ENCODE measurements at regions of chr5 and their contacts with region 1.

Region 1: GRCh38 chr5:77143998-77144836 is 57.1 kb upstream of the ZBED3 start:
- DNase-seq: peak; percentile 47 to 58 (median 53)
- H3K4me3 ChIP-seq: no peak overlapping the region
- H3K4me3 Mint-ChIP-seq: no peak overlapping the region
- H3K27ac ChIP-seq: no peak overlapping the region
- H3K27ac Mint-ChIP-seq: peak overlapping the region in 3 of 7 donors; percentile 32 to 60 (median 40)
- H3K4me1 ChIP-seq: no peaks in the 10 kb centered on the region
- H3K4me1 Mint-ChIP-seq: peaks cover 0 to 4% (median 3%) of the 10 kb centered on the region in 4 donors
- H3K27me3 ChIP-seq: no peaks in the 10 kb centered on the region
- H3K27me3 Mint-ChIP-seq: peaks cover 0 to 2% of the 10 kb centered on the region in 2 donors

Region 2: GRCh38 chr5:76971516-76971915 is 172.7 kb before region 1 on chr5:
- CTCF ChIA-PET with region 1: no interaction called
- POLR2A ChIA-PET with region 1: no interaction called
- intact Hi-C with region 1: no loop called
- DNase-seq: no peak
- H3K4me3 ChIP-seq: no peak overlapping the region
- H3K4me3 Mint-ChIP-seq: no peak overlapping the region
- H3K27ac ChIP-seq: no peak overlapping the region
- H3K27ac Mint-ChIP-seq: no peak overlapping the region
- H3K4me1 ChIP-seq: no peaks in the 10 kb centered on the region
- H3K4me1 Mint-ChIP-seq: no peaks in the 10 kb centered on the region
- H3K27me3 ChIP-seq: no peaks in the 10 kb centered on the region
- H3K27me3 Mint-ChIP-seq: peaks cover 10 to 18% of the 10 kb centered on the region in 2 donors

Region 3: DNA sequence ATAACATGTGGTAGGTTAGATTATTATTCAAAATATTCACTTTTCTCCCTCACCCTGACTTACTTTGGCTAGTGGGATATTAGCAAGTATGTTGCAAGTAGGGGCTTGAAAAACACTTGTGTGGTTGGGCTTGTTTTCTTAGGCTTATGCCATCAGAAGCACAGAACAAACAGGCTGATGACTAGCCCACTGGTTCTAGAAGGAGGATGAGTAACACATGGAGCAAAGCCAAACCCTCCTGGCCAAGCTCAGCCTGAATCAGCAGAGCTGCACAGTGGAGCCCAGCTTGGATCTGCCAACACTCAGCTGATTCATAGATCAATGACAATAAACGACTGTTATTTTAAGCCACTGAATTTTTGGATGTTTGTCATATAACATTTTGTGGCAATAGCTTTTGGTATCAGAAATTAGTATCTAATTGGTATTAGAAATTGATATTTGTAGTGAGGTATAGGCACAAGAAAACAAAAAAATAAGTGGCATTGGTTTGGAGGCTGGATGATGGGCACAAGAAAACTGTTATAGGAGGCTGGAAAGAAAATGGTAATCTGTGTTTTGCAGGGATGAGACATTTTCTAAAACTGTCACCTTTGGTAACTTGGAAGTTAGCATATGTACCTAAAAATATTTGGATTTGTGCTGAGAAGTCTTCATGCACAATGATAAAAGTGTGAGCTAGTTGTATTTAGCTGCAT is 11.0 kb before region 1 on chr5:
- CTCF ChIA-PET with region 1: interaction called, 11 read pairs
- POLR2A ChIA-PET with region 1: no interaction called
- intact Hi-C with region 1: no loop called
- DNase-seq: no peak
- H3K4me3 ChIP-seq: no peak overlapping the region
- H3K4me3 Mint-ChIP-seq: no peak overlapping the region
- H3K27ac ChIP-seq: no peak overlapping the region
- H3K27ac Mint-ChIP-seq: peak overlapping the region in 1 of 7 donors; percentile 20
- H3K4me1 ChIP-seq: no peaks in the 10 kb centered on the region
- H3K4me1 Mint-ChIP-seq: peaks cover 0 to 2% (median 0%) of the 10 kb centered on the region in 4 donors
- H3K27me3 ChIP-seq: no peaks in the 10 kb centered on the region
- H3K27me3 Mint-ChIP-seq: peaks cover 0 to 11% of the 10 kb centered on the region in 2 donors

Region 4: GRCh38 chr5:77155179-77155785 is 11.1 kb after region 1 on chr5:
- CTCF ChIA-PET with region 1: interaction called, 31 read pairs
- POLR2A ChIA-PET with region 1: no interaction called
- intact Hi-C with region 1: no loop called
- DNase-seq: peak; percentile 73 to 84 (median 77)
- H3K4me3 ChIP-seq: no peak overlapping the region
- H3K4me3 Mint-ChIP-seq: peak overlapping the region in 3 of 8 donors; percentile 2 to 73 (median 68)
- H3K27ac ChIP-seq: no peak overlapping the region
- H3K27ac Mint-ChIP-seq: peak overlapping the region; percentile 58 to 99 (median 96)
- H3K4me1 ChIP-seq: peaks cover 28% of the 10 kb centered on the region
- H3K4me1 Mint-ChIP-seq: peaks cover 14 to 23% (median 21%) of the 10 kb centered on the region in 4 donors
- H3K27me3 ChIP-seq: no peaks in the 10 kb centered on the region
- H3K27me3 Mint-ChIP-seq: peaks cover 2 to 11% of the 10 kb centered on the region in 2 donors

Region 5: DNA sequence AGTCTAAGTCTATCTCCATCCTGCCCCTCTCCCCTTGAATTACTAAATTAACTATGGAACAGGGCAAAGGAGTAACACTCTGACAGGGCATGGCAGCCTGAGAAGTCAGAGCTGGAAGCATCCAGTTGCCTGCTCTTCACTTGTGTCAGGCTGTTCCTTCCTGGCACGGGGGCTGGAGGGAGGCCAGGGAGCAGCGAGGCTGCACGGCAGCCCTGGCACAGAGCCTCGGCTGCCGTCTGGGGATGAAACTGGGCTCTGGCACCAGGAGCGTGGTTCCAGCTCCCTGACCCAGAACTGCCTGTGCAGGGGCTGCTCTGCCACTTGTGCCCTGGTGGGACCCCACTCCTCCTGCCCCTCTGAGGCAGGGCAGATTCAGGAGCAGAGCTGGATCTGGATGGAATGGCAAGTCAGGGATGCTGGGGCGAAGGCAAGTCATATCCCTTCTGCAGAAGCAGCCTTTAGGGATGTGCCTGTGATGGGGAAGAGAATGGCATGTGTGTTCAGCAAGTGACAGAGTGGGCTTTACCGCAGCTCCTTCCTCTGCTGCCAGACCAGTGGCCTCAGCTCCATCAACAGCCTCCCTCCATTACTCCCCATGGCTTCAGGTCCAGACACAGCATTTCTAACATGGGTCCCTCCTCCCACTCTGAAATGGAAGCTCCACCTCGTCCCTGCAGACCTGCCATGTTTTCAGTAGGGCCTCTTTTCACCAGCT is 24.1 kb after region 1 on chr5:
- CTCF ChIA-PET with region 1: interaction called, 13 read pairs
- POLR2A ChIA-PET with region 1: no interaction called
- intact Hi-C with region 1: no loop called
- DNase-seq: no peak
- H3K4me3 ChIP-seq: no peak overlapping the region
- H3K4me3 Mint-ChIP-seq: no peak overlapping the region
- H3K27ac ChIP-seq: no peak overlapping the region
- H3K27ac Mint-ChIP-seq: no peak overlapping the region
- H3K4me1 ChIP-seq: no peaks in the 10 kb centered on the region
- H3K4me1 Mint-ChIP-seq: no peaks in the 10 kb centered on the region
- H3K27me3 ChIP-seq: no peaks in the 10 kb centered on the region
- H3K27me3 Mint-ChIP-seq: peaks cover 2 to 8% of the 10 kb centered on the region in 2 donors

Region 6: DNA sequence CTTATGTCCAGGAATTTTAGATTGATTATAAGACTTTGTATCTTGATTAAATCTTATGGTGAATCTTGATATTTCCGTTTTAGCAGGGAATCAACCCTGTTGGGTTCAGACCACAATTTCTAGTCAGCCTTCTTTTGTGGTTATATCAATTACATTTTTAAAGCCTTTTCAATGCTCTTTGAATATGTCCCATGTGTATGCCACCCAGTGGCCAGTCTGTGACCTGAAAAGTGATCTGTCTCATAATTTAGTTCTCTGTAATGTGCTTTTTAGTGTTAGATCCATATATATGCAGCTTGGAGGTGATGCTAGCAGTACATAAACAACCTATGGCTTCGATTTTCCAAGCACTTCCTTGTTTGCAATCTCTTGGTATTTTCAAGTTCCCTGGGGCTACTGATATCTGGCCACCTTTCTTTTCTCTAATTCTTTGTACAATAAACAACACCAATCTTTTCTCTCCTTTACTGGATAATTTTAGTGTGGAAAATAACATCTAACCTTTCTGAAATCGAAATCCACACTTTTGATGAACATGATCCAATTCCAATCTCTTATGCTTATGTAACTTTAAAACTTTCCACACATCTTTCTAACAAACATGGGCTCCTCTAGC is 95.0 kb after region 1 on chr5:
- CTCF ChIA-PET with region 1: interaction called, 3 read pairs
- POLR2A ChIA-PET with region 1: no interaction called
- intact Hi-C with region 1: loop called (anchors 2 kb)
- DNase-seq: peak in 3 of 5 donors; percentile 10 to 35 (median 25)
- H3K4me3 ChIP-seq: no peak overlapping the region
- H3K4me3 Mint-ChIP-seq: no peak overlapping the region
- H3K27ac ChIP-seq: no peak overlapping the region
- H3K27ac Mint-ChIP-seq: no peak overlapping the region
- H3K4me1 ChIP-seq: no peaks in the 10 kb centered on the region
- H3K4me1 Mint-ChIP-seq: no peaks in the 10 kb centered on the region
- H3K27me3 ChIP-seq: no peaks in the 10 kb centered on the region
- H3K27me3 Mint-ChIP-seq: peaks cover 6 to 9% of the 10 kb centered on the region in 2 donors

Region 7: DNA sequence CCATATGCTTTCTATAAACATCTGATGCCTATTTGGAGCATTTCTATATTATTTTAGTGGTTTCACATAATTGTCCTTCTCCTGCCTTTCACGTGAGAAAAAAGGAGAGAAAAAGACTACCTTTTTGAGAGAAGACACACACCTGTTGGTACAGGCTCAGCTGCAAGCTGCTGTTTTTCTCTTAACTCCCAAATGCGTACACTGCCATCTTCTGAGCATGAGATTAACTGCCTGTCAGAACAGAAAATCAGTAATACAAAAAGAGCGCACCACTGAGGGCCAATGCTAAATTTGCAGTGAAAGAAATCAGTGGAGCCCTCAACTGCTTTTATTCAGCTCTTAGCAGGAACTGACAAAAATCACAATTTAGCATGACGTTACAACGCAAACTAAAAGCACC is 293.0 kb after region 1 on chr5:
- CTCF ChIA-PET with region 1: interaction called, 4 read pairs
- POLR2A ChIA-PET with region 1: no interaction called
- intact Hi-C with region 1: loop called (anchors 1 kb)
- DNase-seq: peak in 1 of 5 donors; percentile 9
- H3K4me3 ChIP-seq: no peak overlapping the region
- H3K4me3 Mint-ChIP-seq: no peak overlapping the region
- H3K27ac ChIP-seq: no peak overlapping the region
- H3K27ac Mint-ChIP-seq: no peak overlapping the region
- H3K4me1 ChIP-seq: no peaks in the 10 kb centered on the region
- H3K4me1 Mint-ChIP-seq: no peaks in the 10 kb centered on the region
- H3K27me3 ChIP-seq: no peaks in the 10 kb centered on the region
- H3K27me3 Mint-ChIP-seq: no peaks in the 10 kb centered on the region

Region 8: DNA sequence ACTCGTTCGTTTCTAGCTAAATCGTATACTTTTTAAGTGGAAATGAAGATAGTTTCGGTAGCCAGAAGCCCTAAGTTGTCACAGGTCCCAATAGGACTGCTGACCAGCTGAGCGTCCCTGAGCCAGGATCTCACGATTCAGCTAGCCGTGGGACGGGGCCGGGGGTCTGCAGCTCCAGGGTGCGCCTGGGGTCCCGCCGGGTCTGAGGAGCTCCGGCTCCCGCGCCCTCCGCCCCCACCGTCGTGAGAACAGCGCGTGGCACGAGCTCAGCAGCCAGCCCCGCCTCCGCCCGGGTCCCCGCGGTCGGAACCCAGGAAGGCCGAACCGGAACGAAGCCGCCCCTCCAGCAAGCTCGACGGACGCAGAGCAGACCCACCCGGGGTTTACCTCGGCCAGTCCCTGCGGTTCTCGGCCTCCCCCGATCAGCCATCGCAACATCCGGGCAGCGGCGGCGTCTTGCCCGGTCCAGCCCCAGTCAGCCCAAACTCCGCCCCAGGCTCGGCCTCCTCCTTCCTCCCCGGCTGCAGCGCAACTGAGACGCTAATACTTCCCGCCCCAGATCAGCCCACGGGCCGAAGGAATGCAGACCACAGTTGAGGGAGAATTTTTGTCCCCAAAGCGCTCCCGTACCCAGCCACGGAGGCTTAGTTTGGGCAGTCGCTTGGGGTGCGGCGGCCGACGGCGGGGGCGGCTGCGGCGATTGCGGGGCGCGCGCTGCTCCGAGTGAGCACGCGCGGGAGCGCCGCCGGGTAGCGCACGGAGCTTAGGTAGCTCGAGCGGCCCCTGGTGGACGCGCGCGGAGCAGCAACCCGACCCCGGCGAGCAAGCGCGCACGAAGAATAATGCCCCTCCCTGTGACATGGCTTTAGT is 347.8 kb after region 1 on chr5 and contains the start of gene WDR41:
- CTCF ChIA-PET with region 1: interaction called, 46 read pairs
- POLR2A ChIA-PET with region 1: interaction called, 8 read pairs
- intact Hi-C with region 1: loop called (anchors 1 kb)
- DNase-seq: peak; percentile 79 to 87 (median 84)
- H3K4me3 ChIP-seq: peak within 1 kb of the TSS; percentile 57 to 91
- H3K4me3 Mint-ChIP-seq: peak within 1 kb of the TSS; percentile 85 to 95 (median 91)
- H3K27ac ChIP-seq: peak within 1 kb of the TSS; percentile 64
- H3K27ac Mint-ChIP-seq: peak within 1 kb of the TSS; percentile 65 to 94 (median 91)
- H3K4me1 ChIP-seq: peaks cover 7% of the 10 kb centered on the region
- H3K4me1 Mint-ChIP-seq: peaks cover 9 to 14% (median 10%) of the 10 kb centered on the region in 4 donors
- H3K27me3 ChIP-seq: no peaks in the 10 kb centered on the region
- H3K27me3 Mint-ChIP-seq: peaks cover 10 to 12% of the 10 kb centered on the region in 2 donors
- total RNA-seq, gene WDR41: 11.0 to 14.0 TPM